Heart right ventricle (tissue), 16 donors: ENCODE measurements at regions of chr11 and their contacts with region 1.

Region 1: DNA sequence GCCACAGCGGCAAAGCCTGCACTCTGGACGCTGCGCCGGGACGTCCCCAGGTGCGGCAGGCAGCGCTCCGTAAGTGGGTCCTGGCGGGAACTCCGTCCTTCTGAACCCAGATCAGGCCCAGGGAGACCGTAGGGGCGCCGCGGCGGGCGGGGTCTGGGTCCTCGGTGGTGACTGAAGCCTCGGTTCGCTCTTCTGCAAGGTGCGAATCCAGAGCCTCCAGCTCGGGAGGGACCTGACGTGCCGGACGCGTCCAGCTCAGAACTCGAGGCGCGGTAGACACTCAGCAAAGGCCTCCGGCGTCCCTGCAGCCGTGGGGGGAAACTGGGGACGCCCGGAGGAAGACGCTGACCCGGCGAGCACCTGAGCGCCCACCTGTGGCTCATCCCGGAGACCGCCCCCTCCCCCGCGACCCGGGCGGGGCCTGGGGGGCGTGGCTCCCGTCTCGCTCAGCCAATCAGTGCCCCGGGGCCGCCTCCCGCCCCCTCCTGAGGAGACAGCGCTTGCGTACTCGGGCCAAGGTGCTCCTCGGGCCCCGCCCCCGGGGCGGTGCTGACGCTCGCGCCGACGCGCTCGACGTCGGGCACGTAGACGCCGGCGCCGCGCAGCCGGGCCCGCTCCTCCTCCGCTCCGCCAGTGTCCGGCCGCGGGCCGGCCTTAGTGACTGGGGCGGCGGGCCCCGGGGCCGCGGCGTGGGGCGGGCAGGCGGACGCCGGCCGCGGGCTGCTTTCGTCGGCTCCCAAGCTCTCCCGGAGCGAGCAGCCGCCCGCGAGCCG is at the start of gene PPFIA1:
- DNase-seq: peak; percentile 95 to 96
- ATAC-seq: peak; percentile 98 to 100 (median 99)
- H3K4me3 ChIP-seq: peak within 1 kb of the TSS; percentile 62 to 98 (median 84)
- H3K27ac ChIP-seq: peak within 1 kb of the TSS; percentile 62 to 95 (median 90)
- H3K4me1 ChIP-seq: peaks cover 6 to 39% (median 25%) of the 10 kb centered on the region in 9 donors
- H3K27me3 ChIP-seq: peaks cover 0 to 15% (median 0%) of the 10 kb centered on the region in 7 donors
- CTCF ChIP-seq: peak in 3 of 9 donors; percentile 22 to 32 (median 26)
- total RNA-seq, gene PPFIA1: 35.8 to 57.2 (median 39.5) TPM

Region 2: GRCh38 chr11:70202898-70203748 is 67.2 kb before region 1 on chr11 and contains the start of gene FADD:
- intact Hi-C with region 1: loop called in 2 of 10 experiments (anchors 5 kb)
- DNase-seq: peak; percentile 90
- ATAC-seq: peak; percentile 84 to 93 (median 89)
- H3K4me3 ChIP-seq: peak within 1 kb of the TSS; percentile 62 to 96 (median 94)
- H3K27ac ChIP-seq: peak within 1 kb of the TSS in 9 of 10 donors; percentile 88 to 98 (median 94)
- H3K4me1 ChIP-seq: peaks cover 8 to 40% (median 23%) of the 10 kb centered on the region in 9 donors
- H3K27me3 ChIP-seq: no peaks in the 10 kb centered on the region
- CTCF ChIP-seq: no peak
- total RNA-seq, gene FADD: 6.7 to 12.7 (median 9.0) TPM

Region 3: GRCh38 chr11:70305501-70305900 is 35.2 kb after region 1 on chr11:
- intact Hi-C with region 1: loop called in 1 of 10 experiments (anchors 1 kb)
- DNase-seq: no peak
- ATAC-seq: no peak
- H3K4me3 ChIP-seq: no peak overlapping the region
- H3K27ac ChIP-seq: no peak overlapping the region
- H3K4me1 ChIP-seq: peaks cover 0 to 38% (median 9%) of the 10 kb centered on the region in 9 donors
- H3K27me3 ChIP-seq: no peaks in the 10 kb centered on the region
- CTCF ChIP-seq: no peak

Region 4: GRCh38 chr11:70397983-70398833 is 127.9 kb after region 1 on chr11 and contains the start of gene CTTN:
- intact Hi-C with region 1: loop called in 1 of 10 experiments (anchors 10 kb)
- DNase-seq: peak; percentile 85 to 90
- ATAC-seq: peak; percentile 83 to 91 (median 86)
- H3K4me3 ChIP-seq: peak within 1 kb of the TSS; percentile 54 to 97 (median 86)
- H3K27ac ChIP-seq: peak within 1 kb of the TSS; percentile 47 to 92 (median 88)
- H3K4me1 ChIP-seq: peaks cover 7 to 53% (median 34%) of the 10 kb centered on the region in 9 donors
- H3K27me3 ChIP-seq: peaks cover 0 to 81% (median 0%) of the 10 kb centered on the region in 7 donors
- CTCF ChIP-seq: no peak
- total RNA-seq, gene CTTN: 115 to 173 (median 146) TPM